Gastrocnemius medialis (tissue), 4 donors: ENCODE measurements at regions of chr1 and their contacts with region 1.

Region 1: DNA sequence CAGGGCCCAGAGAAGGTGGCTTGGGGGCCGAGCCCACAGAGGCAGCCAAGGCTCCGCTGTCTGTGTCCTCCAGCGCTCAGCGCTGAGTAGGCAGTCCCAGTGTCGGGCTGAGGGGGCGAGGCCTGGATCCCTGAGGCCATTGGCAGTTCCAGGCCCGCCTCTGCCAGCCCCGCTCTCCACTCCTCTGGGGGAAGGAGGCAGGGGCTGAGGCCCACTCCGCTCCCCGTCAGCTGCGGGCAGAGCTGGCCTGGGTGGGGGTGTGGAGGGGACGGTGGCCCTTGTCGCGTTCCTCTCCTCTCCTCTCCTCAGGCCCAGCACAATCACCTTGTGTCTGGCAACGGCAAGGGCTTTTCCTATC is 132.8 kb downstream of the CASZ1 start:
- DNase-seq: peak in 1 of 2 donors; percentile 64
- ATAC-seq: peak; percentile 7 to 34
- H3K4me3 ChIP-seq: no peak overlapping the region
- H3K27ac ChIP-seq: peak overlapping the region; percentile 89 to 95 (median 92)
- H3K4me1 ChIP-seq: peaks cover 50 to 58% of the 10 kb centered on the region in 2 donors
- H3K27me3 ChIP-seq: no peaks in the 10 kb centered on the region
- CTCF ChIP-seq: no peak
- POLR2A ChIP-seq: no peak

Region 2: GRCh38 chr1:10253755-10254154 is 409.9 kb before region 1 on chr1:
- in situ Hi-C with region 1: no loop called
- intact Hi-C with region 1: no loop called
- DNase-seq: peak; percentile 73 to 81
- ATAC-seq: peak; percentile 93 to 94
- H3K4me3 ChIP-seq: no peak overlapping the region
- H3K27ac ChIP-seq: peak overlapping the region; percentile 89 to 93 (median 92)
- H3K4me1 ChIP-seq: peaks cover 71 to 76% of the 10 kb centered on the region in 2 donors
- H3K27me3 ChIP-seq: no peaks in the 10 kb centered on the region
- CTCF ChIP-seq: no peak
- POLR2A ChIP-seq: peak in 1 of 2 donors; percentile 18

Region 3: GRCh38 chr1:10528066-10529014 is 135.3 kb before region 1 on chr1:
- in situ Hi-C with region 1: no loop called
- intact Hi-C with region 1: loop called (anchors 5 kb)
- DNase-seq: peak; percentile 50 to 70
- ATAC-seq: peak; percentile 97 to 98
- H3K4me3 ChIP-seq: peak overlapping the region in 1 of 4 donors; percentile 4
- H3K27ac ChIP-seq: peak overlapping the region; percentile 14 to 75 (median 66)
- H3K4me1 ChIP-seq: peaks cover 24 to 38% of the 10 kb centered on the region in 2 donors
- H3K27me3 ChIP-seq: no peaks in the 10 kb centered on the region
- CTCF ChIP-seq: no peak
- POLR2A ChIP-seq: no peak

Region 4: GRCh38 chr1:10724948-10725847 is 61.5 kb after region 1 on chr1:
- in situ Hi-C with region 1: no loop called
- intact Hi-C with region 1: loop called (anchors 2 kb)
- DNase-seq: peak; percentile 88 to 96
- ATAC-seq: peak; percentile 40 to 43
- H3K4me3 ChIP-seq: peak overlapping the region in 1 of 4 donors; percentile 3
- H3K27ac ChIP-seq: peak overlapping the region; percentile 93 to 100 (median 98)
- H3K4me1 ChIP-seq: peaks cover 59 to 81% of the 10 kb centered on the region in 2 donors
- H3K27me3 ChIP-seq: no peaks in the 10 kb centered on the region
- CTCF ChIP-seq: no peak
- POLR2A ChIP-seq: peak; percentile 24 to 25

Region 5: DNA sequence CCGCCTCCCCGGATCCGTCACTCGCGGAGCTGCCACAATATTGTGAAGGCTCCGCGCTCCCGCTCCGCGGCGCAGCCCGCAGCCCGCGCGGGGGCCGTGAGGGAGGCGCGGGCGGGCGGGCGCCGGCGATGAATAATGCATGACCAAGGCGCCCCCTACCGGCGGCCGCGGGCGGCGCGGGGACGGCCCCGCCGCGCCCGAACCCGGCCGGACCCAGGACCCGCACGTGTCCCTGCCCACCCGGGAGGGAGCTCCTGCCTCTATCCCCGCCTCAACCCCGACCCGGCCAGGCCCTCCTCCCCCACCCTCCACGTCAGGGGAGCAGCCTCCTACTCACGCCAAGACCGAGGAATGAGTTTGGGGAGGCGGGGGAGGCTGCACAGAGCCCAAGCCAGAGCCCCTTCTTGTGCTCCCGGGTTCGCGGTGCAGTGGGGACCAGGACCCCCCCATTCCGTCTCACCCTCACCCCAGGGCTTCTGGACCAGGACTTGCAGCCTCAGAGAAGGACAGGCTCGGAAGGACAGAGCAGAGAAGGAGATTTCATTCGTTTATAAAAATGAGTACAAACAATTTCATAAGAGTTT is 203.6 kb after region 1 on chr1:
- in situ Hi-C with region 1: no loop called
- intact Hi-C with region 1: loop called (anchors 2 kb)
- DNase-seq: peak in 1 of 2 donors; percentile 42
- ATAC-seq: peak; percentile 67 to 73
- H3K4me3 ChIP-seq: peak overlapping the region; percentile 46 to 60 (median 50)
- H3K27ac ChIP-seq: peak overlapping the region in 1 of 4 donors; percentile 6
- H3K4me1 ChIP-seq: peaks cover 27 to 35% of the 10 kb centered on the region in 2 donors
- H3K27me3 ChIP-seq: peaks cover 0 to 3% (median 2%) of the 10 kb centered on the region in 3 donors
- CTCF ChIP-seq: peak; percentile 30 to 98 (median 96)
- POLR2A ChIP-seq: no peak